ENCODE measurements at regions of chr16 and their contacts with region 1.

Region 1: DNA sequence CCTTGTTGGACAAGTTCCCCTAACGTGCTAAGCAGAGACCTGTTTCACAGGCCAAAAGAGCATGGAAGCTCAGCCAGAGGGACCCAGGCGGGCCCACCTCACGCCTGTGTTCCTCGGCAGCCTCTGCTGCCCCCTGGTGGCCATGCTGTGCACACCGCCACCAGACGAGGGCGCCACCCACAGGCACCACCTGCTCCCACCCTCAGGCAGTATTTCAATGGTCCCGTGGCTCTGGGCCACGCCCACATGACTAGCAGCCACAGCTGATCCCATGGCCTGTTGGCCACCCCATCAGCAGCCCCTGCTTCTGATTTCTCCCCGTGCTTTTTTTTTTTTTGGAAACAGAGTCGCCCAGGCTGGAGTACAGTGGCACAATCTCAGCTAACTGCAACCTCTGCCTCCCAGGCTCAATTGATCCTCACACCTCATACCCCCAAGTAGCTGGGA is 18.9 kb downstream of the MPG start:
- DNase-seq: peak; percentile 74 to 98 (median 86)

Region 2: GRCh38 chr16:65671-66137 is 31.3 kb before region 1 on chr16:
- intact Hi-C with region 1: loop called (anchors 1 kb)
- DNase-seq: peak; percentile 76 to 98 (median 88)

Measured in posterior cingulate gyrus (tissue), 11 donors.